Common myeloid progenitor, CD34-positive (primary cell): ENCODE measurements at regions of chr10 and their contacts with region 1.

Region 1: GRCh38 chr10:96642973-96643372 is 56.2 kb upstream of the TM9SF3 start:
- DNase-seq: peak; percentile 83 to 91 (median 87)
- H3K4me3 ChIP-seq: no peak overlapping the region
- H3K27ac ChIP-seq: no peak overlapping the region
- H3K4me1 ChIP-seq: peaks cover 0 to 27% (median 2%) of the 10 kb centered on the region in 4 experiments
- H3K27me3 ChIP-seq: no peaks in the 10 kb centered on the region

Region 2: GRCh38 chr10:96524741-96525140 is 118.2 kb before region 1 on chr10:
- CTCF ChIA-PET with region 1: no interaction called
- POLR2A ChIA-PET with region 1: no interaction called
- DNase-seq: no peak
- H3K4me3 ChIP-seq: no peak overlapping the region
- H3K27ac ChIP-seq: no peak overlapping the region
- H3K4me1 ChIP-seq: peaks cover 0 to 2% (median 0%) of the 10 kb centered on the region in 4 experiments
- H3K27me3 ChIP-seq: no peaks in the 10 kb centered on the region

Region 3: GRCh38 chr10:96587264-96588059 is 55.5 kb before region 1 on chr10:
- CTCF ChIA-PET with region 1: no interaction called
- POLR2A ChIA-PET with region 1: no interaction called
- DNase-seq: peak in 1 of 3 donors; percentile 55
- H3K4me3 ChIP-seq: peak overlapping the region; percentile 66 to 96 (median 92)
- H3K27ac ChIP-seq: peak overlapping the region; percentile 95 to 98
- H3K4me1 ChIP-seq: peaks cover 20 to 45% (median 38%) of the 10 kb centered on the region in 4 experiments
- H3K27me3 ChIP-seq: peaks cover 0 to 5% (median 0%) of the 10 kb centered on the region in 5 experiments

Region 4: DNA sequence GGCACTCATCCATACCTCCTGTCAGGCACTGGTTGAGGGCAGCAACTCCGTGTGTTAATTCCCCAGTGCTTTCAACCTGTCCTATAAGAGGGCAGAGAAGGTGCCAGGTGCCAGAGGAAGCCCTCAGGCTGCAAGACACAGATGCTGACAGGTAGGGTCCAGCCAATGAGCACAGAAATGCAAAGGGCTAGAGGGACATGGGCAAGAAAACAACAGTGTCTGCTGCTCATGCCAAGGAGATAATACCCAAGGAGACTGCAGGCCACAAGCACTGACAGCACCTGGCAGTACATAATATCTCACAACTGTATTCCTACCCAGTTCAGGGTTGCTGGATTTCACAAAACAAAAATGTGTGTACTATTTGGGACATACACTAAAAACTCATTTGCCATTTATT is 17.8 kb before region 1 on chr10:
- CTCF ChIA-PET with region 1: interaction called, 13 read pairs
- POLR2A ChIA-PET with region 1: no interaction called
- DNase-seq: no peak
- H3K4me3 ChIP-seq: no peak overlapping the region
- H3K27ac ChIP-seq: no peak overlapping the region
- H3K4me1 ChIP-seq: no peaks in the 10 kb centered on the region
- H3K27me3 ChIP-seq: no peaks in the 10 kb centered on the region

Region 5: DNA sequence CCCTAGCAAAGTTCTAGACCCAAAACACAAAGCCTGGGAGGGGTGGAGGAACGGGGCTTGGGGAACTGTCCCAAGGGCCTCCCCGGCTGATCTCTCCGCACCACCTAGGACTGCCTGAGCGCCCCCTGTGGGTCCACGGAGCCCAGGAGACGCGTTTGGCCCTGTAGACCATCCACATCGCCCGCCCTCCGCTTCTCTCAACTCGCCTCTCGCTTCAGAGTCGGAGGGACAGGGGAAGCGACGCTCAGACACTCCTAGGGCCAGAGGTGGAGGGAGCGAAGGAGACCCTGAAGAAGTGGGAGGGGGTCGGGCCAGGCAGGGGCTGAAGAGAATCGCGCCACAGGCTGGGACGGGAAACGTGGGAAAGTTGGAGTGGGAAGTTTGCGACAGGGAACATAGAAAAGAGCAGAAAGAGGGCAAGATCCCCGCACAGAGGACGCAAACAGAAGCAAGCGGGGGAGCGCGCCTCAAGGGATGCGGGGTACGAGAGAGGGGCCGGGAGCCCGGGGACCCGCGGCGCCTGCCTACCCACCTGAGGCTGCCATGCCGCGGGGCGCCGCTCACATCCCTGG is 77.0 kb after region 1 on chr10:
- CTCF ChIA-PET with region 1: interaction called, 55 read pairs
- POLR2A ChIA-PET with region 1: no interaction called
- DNase-seq: peak; percentile 74 to 83 (median 80)
- H3K4me3 ChIP-seq: peak overlapping the region; percentile 74 to 93 (median 83)
- H3K27ac ChIP-seq: peak overlapping the region; percentile 9 to 76
- H3K4me1 ChIP-seq: peaks cover 21 to 48% (median 35%) of the 10 kb centered on the region in 4 experiments
- H3K27me3 ChIP-seq: no peaks in the 10 kb centered on the region

Region 6: DNA sequence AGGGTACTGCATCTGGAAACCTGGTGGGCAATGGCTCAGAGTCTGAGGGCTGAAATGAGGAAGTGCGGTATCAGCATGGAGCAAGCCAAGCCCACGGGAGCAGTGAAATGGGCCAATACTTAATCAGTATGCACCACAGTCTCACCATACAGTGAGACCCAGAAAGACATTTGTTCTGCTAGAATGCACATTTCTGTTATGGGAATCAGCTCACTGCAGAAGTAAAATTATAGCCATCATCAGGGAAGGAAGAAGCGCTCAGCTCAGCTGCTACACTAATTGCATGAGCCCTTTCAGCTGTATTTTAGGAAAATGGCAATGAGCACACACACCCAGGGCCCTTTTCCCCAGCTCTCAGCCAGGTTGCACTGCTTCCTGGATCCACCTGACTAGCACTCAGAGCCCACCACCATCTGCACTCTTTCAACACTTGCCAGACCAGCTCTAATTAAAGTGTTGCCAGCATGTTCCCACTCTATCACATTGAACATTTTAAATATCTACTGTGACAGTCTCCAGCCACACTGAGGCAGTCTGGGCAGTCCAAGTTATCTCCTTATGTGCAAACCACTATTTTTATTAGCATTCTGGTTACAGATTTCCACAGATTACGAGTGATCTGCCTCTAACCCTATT is 121.6 kb after region 1 on chr10:
- CTCF ChIA-PET with region 1: interaction called, 24 read pairs
- POLR2A ChIA-PET with region 1: no interaction called
- DNase-seq: peak in 2 of 3 donors; percentile 67 to 77
- H3K4me3 ChIP-seq: no peak overlapping the region
- H3K27ac ChIP-seq: no peak overlapping the region
- H3K4me1 ChIP-seq: peaks cover 0 to 14% (median 10%) of the 10 kb centered on the region in 4 experiments
- H3K27me3 ChIP-seq: no peaks in the 10 kb centered on the region

Region 7: DNA sequence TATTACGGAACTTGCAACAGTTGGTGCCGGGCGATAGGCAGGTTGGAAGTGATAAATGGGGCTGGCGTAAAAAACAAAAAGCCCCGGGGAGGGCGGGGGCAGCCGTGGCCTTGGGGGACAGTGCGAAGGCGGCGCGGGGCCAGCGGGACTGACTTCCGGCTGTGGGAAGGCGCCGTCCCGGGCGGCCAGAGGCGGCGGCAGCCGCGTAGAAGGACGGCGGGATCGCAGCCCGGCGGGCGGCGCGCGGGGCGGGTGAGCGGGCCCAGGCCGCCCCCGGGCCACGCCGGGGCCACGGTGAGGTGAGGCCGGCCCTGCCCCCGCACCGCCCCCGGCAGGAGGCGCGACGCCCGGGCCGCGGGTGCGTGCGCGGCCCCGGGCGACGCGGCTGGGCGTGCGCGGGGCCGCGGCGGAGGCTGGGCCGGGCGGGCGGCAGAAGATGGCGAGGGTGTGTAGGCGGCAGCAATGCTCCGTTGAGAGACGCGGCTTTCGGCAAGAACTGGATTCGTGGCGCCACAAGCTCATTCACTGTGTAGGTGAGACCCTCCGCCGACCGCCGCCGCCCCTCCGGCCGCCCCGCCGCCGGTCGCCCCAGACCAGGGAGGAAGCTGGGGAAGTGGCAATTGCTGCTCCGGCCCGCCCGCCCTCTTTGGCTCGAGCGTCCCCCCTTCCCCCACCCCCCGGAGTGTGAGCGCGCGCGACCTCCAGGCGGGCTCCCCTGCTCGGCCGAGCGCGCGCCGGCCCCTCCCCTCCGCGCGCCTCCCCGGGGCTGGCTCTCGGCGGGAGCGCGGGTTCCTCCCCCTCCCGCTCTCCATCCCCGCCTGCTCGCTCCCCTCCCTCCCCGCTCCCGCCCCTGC is 189.1 kb after region 1 on chr10 and contains the start of gene LCOR:
- CTCF ChIA-PET with region 1: interaction called, 30 read pairs
- POLR2A ChIA-PET with region 1: interaction called, 4 read pairs
- DNase-seq: peak; percentile 93 to 98 (median 97)
- H3K4me3 ChIP-seq: peak within 1 kb of the TSS; percentile 72 to 89 (median 85)
- H3K27ac ChIP-seq: peak within 1 kb of the TSS; percentile 72 to 85
- H3K4me1 ChIP-seq: peaks cover 30 to 45% (median 38%) of the 10 kb centered on the region in 4 experiments
- H3K27me3 ChIP-seq: no peaks in the 10 kb centered on the region